ENCODE measurements at regions of chr22 and their contacts with region 1.

Region 1: GRCh38 chr22:23539135-23539838 is 40.8 kb downstream of the IGLL1 start:
- DNase-seq: peak; percentile 89
- ATAC-seq: peak; percentile 98

Region 2: GRCh38 chr22:23385291-23386244 is 153.7 kb before region 1 on chr22:
- intact Hi-C with region 1: loop called (anchors 5 kb)
- DNase-seq: peak; percentile 87
- ATAC-seq: peak; percentile 76